Activated B cell treated with CpG ODN at 0.5 μM for 24 hours (primary cell): ENCODE measurements at regions of chr9 and their contacts with region 1.

Region 1: GRCh38 chr9:36487482-36488388 is 85.0 kb upstream of the MELK start:
- DNase-seq: peak; percentile 87
- ATAC-seq: peak; percentile 91
- H3K4me3 Mint-ChIP-seq: peak overlapping the region; percentile 97
- H3K27ac Mint-ChIP-seq: peak overlapping the region; percentile 100
- H3K4me1 Mint-ChIP-seq: peaks cover 44% of the 10 kb centered on the region
- H3K27me3 Mint-ChIP-seq: no peaks in the 10 kb centered on the region
- CTCF ChIP-seq: no peak

Region 2: GRCh38 chr9:36136272-36136893 is 351.4 kb before region 1 on chr9 and contains the start of gene GLIPR2:
- CTCF ChIA-PET with region 1: no interaction called
- POLR2A ChIA-PET with region 1: no interaction called
- intact Hi-C with region 1: loop called (anchors 5 kb)
- DNase-seq: peak; percentile 79
- ATAC-seq: peak; percentile 98
- H3K4me3 Mint-ChIP-seq: peak within 1 kb of the TSS; percentile 87
- H3K27ac Mint-ChIP-seq: peak within 1 kb of the TSS; percentile 88
- H3K4me1 Mint-ChIP-seq: peaks cover 53% of the 10 kb centered on the region
- H3K27me3 Mint-ChIP-seq: no peaks in the 10 kb centered on the region
- CTCF ChIP-seq: no peak
- total RNA-seq, gene GLIPR2: 13.6 and 14.3 TPM in 2 replicates

Region 3: DNA sequence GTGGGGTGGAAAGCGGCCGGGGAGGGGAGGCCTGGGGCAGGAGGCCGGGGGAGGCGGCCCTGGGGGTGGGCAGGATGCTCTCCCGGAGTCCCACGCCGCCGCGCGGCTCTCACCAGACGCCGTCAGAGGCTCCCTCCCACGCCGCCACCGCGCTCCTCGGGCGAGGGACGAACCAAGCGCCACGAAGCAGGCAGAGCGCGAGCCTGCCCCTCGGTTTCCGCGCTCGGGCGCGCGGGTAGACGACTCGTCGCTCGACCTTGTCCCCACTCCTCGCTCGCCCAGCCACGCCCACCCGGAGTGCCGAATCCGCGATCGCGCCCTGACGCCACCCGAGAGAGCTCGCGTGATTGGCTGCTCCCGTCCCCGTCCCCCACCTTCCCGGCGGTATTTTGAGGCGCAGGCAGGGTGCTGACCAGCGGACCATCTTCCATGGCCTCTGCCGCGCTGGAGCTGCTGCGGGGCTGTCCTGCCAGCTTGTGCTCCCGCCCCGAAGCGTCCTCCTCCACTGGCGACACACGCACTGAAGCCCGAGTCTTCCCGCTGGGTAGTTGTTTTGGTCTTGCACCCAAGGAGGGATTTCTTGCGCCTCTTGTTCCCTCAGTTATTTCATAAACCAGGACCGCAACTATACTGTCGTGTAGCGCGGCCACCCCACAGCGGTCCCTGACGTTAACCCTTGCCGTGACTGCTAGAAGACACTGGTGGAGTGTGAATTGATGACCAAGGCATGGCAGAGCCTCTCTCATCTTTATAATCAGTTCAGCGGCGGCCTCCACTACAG is 229.3 kb before region 1 on chr9 and contains the start of gene GNE:
- CTCF ChIA-PET with region 1: no interaction called
- POLR2A ChIA-PET with region 1: interaction called, 5 read pairs
- intact Hi-C with region 1: loop called (anchors 5 kb)
- DNase-seq: peak; percentile 97
- ATAC-seq: peak; percentile 80
- H3K4me3 Mint-ChIP-seq: peak within 1 kb of the TSS; percentile 95
- H3K27ac Mint-ChIP-seq: peak within 1 kb of the TSS; percentile 92
- H3K4me1 Mint-ChIP-seq: peaks cover 16% of the 10 kb centered on the region
- H3K27me3 Mint-ChIP-seq: no peaks in the 10 kb centered on the region
- CTCF ChIP-seq: no peak
- total RNA-seq, gene GNE: 18.1 and 19.3 TPM in 2 replicates

Region 4: DNA sequence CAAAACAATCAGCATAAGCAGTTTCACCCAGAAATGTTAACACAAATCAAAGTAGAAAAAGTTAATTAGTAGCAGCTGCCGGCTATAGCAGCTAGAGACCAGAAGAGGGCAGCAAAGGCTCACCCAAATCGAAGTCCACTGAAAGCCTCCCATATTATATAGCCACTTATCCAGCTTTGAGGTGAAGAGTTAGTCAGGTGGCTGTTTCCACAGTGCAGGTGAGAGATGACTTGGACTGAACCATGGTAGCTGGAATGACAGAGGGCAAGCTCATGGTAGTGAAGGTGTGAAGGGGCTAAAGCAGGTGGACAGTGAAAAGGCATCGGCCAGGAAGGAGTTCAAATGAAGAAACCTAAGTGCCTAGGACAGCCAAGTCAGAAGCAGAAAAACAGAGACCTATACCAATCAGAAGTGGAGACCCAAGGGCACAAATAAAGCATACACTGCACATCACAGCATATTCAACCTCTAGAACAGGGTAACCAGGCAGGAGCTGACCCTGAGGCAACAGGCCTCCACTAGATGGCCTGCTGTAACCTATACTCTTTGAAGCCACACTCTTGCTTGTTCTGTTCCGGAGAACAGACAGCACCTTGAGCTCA is 80.5 kb before region 1 on chr9:
- CTCF ChIA-PET with region 1: interaction called, 7 read pairs
- POLR2A ChIA-PET with region 1: interaction called, 12 read pairs
- intact Hi-C with region 1: no loop called
- DNase-seq: peak; percentile 31
- ATAC-seq: peak; percentile 93
- H3K4me3 Mint-ChIP-seq: no peak overlapping the region
- H3K27ac Mint-ChIP-seq: peak overlapping the region; percentile 37
- H3K4me1 Mint-ChIP-seq: peaks cover 10% of the 10 kb centered on the region
- H3K27me3 Mint-ChIP-seq: no peaks in the 10 kb centered on the region
- CTCF ChIP-seq: peak; percentile 97

Region 5: DNA sequence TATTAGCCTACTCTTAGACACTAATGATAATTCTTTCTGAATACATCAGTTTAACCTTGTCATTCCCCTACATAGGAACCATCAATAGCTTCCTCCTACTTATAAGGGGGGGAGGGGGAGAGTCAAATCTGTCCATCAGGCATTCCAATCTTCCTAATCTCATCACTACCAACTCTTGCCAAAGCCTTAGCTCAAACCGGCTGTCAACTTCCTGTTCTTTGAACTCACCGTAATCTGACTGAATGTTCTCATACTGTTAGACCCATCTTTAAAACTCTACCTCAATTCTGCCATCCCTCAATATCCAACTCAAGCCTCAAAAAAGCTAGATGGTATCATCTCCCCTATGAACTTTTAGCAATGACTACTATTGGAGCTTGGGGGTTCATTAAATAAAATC is 45.8 kb before region 1 on chr9:
- CTCF ChIA-PET with region 1: no interaction called
- POLR2A ChIA-PET with region 1: no interaction called
- intact Hi-C with region 1: no loop called
- DNase-seq: no peak
- ATAC-seq: no peak
- H3K4me3 Mint-ChIP-seq: no peak overlapping the region
- H3K27ac Mint-ChIP-seq: no peak overlapping the region
- H3K4me1 Mint-ChIP-seq: peaks cover 13% of the 10 kb centered on the region
- H3K27me3 Mint-ChIP-seq: no peaks in the 10 kb centered on the region
- CTCF ChIP-seq: no peak

Region 6: DNA sequence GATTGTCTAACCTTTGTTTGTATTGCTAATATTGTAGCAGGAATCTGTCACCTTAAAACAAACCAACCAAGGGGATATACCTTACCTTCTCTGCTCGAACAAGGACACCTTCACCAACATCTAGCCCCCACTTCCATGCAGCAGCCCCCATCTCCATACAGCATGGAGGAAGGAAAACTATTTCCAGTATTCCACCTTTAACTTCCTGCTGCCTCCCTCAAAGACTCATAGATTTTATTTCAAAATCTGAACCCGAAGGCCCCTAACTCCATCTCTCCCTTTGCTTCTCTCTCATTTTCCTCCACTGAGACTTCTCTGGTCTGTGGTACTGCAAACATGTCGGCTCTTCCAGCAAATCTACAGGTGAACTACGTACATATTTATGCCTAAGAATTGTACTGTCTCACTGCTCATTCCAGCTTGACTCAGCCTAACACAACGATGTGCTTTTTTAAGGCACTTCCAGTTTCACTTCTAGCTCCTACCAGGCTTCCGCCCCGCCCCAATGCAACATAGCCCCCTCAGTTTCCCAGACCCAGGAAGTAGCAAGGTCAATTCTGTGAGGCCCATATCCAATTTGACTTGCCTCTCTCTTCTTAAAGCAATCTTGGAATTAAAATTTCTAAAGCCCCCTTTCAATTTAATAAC is 17.0 kb before region 1 on chr9:
- CTCF ChIA-PET with region 1: interaction called, 5 read pairs
- POLR2A ChIA-PET with region 1: interaction called, 42 read pairs
- intact Hi-C with region 1: loop called (anchors 1 kb)
- DNase-seq: peak; percentile 36
- ATAC-seq: peak; percentile 99
- H3K4me3 Mint-ChIP-seq: peak overlapping the region; percentile 82
- H3K27ac Mint-ChIP-seq: peak overlapping the region; percentile 95
- H3K4me1 Mint-ChIP-seq: peaks cover 35% of the 10 kb centered on the region
- H3K27me3 Mint-ChIP-seq: no peaks in the 10 kb centered on the region
- CTCF ChIP-seq: no peak

Region 7: DNA sequence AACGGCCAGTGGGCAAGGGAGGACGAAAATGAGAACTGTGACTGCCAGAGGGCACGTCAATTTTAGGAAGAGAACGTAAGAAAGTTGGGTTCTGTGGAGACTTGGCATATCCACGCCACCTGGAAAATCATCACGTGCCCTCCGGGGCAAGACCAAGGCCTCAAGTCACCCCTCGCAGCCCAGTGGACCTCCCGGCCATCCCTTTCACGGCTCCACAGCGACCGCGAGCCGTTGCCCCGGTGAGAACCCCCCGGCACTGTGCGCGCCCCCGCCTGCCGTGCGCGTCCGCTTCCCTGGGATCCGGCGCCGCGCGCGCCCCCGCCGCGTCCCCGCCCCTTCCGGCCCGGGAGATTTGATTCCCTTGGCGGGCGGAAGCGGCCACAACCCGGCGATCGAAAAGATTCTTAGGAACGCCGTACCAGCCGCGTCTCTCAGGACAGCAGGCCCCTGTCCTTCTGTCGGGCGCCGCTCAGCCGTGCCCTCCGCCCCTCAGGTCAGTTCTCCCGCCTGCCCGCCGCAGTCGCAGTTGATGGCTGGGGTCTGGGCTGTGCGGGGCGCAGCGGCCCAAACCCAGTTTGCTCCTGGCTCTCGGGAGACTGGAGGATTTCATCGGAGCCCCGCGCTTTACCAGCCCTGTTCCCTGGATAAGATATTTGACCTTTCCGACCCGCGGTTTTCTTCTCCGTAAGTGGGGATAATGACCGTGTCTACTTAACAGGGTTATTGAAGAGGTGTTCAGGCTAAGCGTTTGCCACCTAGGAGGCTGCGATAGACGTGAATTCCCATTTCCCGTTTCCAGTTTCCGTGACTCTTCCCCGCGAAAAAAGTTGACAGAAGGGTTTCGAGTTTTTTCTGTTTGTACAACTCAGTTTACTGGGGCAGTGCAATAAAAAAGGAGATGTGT is 85.0 kb after region 1 on chr9 and contains the start of gene MELK:
- CTCF ChIA-PET with region 1: no interaction called
- POLR2A ChIA-PET with region 1: no interaction called
- intact Hi-C with region 1: loop called (anchors 5 kb)
- DNase-seq: peak; percentile 91
- ATAC-seq: peak; percentile 89
- H3K4me3 Mint-ChIP-seq: peak within 1 kb of the TSS; percentile 88
- H3K27ac Mint-ChIP-seq: peak within 1 kb of the TSS; percentile 73
- H3K4me1 Mint-ChIP-seq: peaks cover 12% of the 10 kb centered on the region
- H3K27me3 Mint-ChIP-seq: no peaks in the 10 kb centered on the region
- CTCF ChIP-seq: no peak
- total RNA-seq, gene MELK: 0.76 and 1.2 TPM in 2 replicates

Region 8: GRCh38 chr9:36584622-36585470 is 97.1 kb after region 1 on chr9:
- CTCF ChIA-PET with region 1: no interaction called
- POLR2A ChIA-PET with region 1: no interaction called
- intact Hi-C with region 1: no loop called
- DNase-seq: no peak
- ATAC-seq: no peak
- H3K4me3 Mint-ChIP-seq: no peak overlapping the region
- H3K27ac Mint-ChIP-seq: no peak overlapping the region
- H3K4me1 Mint-ChIP-seq: no peaks in the 10 kb centered on the region
- H3K27me3 Mint-ChIP-seq: no peaks in the 10 kb centered on the region
- CTCF ChIP-seq: no peak

Region 9: DNA sequence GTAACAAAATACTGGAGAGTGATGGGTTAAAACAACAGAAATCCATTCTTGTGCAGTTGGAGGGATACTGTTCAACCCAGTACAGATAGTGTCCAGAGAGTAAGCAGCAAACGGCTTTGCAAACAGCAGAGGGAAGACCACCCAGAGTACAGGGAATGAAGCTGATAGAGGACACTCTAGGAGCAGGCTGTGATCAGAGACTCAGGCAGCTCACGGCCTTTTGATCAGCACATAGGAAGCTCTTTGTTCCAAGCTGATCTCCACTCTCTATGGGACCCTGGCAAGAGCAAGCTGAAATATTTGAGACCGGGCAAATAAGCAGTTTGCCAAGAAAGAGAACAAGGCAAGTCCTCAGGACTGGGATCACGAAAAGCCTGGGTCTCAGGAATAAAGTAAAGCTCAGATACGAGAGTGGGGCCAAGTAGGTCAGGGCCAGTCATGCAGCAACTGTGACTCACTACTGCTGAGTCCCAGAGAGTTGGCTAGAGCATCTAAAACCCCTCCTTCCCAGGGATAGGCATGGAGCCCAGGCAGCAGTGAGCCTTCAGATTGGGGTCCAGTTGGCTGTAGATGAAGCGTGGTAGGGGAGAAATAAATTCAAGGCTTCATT is 137.4 kb after region 1 on chr9:
- CTCF ChIA-PET with region 1: no interaction called
- POLR2A ChIA-PET with region 1: no interaction called
- intact Hi-C with region 1: no loop called
- DNase-seq: no peak
- ATAC-seq: no peak
- H3K4me3 Mint-ChIP-seq: no peak overlapping the region
- H3K27ac Mint-ChIP-seq: no peak overlapping the region
- H3K4me1 Mint-ChIP-seq: no peaks in the 10 kb centered on the region
- H3K27me3 Mint-ChIP-seq: no peaks in the 10 kb centered on the region
- CTCF ChIP-seq: no peak